Psoas muscle (tissue), 8 donors: ENCODE measurements at regions of chr17 and their contacts with region 1.

Region 1: DNA sequence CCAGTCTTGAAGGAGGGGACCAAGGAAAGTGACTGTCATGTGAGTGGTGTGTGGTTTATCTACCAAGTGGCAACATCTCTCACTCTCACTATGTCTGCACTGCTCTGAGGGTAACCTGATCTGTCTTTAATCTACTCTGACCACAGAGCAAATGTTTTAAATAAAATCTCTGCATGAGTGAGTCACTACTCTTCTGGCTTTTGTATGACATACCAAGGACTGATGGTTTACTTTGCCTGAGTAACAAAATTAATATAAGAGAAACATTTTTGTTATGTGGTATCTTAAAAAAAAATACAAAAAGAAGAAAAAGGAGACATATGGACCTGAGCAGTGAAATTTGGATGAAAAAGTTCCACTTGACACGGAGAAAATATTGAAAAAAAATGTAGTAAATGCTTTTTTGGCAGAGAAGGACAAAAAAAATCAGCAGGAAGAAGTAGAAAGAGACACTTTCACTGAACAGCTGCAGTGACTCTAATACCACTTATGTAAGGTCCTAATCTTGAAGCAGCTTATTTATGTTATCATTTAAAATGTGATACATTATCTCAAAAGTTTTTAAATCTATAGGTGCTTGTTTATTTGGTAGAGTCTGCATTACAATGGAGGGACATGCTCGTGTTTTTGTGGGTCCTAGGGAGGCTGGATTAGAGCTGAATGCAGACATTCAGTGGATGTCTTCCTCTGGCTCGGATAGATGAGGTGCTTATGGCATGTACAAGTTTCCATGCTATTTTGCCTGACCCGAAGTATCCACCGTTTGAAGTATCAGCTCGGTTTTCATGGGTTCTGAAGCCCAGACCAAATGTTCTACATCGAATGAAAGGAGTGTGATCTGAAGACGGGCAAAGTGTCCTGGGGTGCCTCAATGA is 240.7 kb downstream of the MAP2K6 start:
- DNase-seq: no peak
- ATAC-seq: peak; percentile 90 to 98 (median 96)
- H3K4me3 ChIP-seq: no peak overlapping the region
- H3K27ac ChIP-seq: peak overlapping the region; percentile 27
- H3K4me1 ChIP-seq: peaks cover 12% of the 10 kb centered on the region
- H3K27me3 ChIP-seq: no peaks in the 10 kb centered on the region
- CTCF ChIP-seq: no peak

Region 2: GRCh38 chr17:69179227-69179952 is 475.8 kb before region 1 on chr17:
- intact Hi-C with region 1: no loop called
- DNase-seq: no peak
- ATAC-seq: no peak
- H3K4me3 ChIP-seq: no peak overlapping the region
- H3K27ac ChIP-seq: no peak overlapping the region
- H3K4me1 ChIP-seq: no peaks in the 10 kb centered on the region
- H3K27me3 ChIP-seq: no peaks in the 10 kb centered on the region
- CTCF ChIP-seq: no peak

Region 3: DNA sequence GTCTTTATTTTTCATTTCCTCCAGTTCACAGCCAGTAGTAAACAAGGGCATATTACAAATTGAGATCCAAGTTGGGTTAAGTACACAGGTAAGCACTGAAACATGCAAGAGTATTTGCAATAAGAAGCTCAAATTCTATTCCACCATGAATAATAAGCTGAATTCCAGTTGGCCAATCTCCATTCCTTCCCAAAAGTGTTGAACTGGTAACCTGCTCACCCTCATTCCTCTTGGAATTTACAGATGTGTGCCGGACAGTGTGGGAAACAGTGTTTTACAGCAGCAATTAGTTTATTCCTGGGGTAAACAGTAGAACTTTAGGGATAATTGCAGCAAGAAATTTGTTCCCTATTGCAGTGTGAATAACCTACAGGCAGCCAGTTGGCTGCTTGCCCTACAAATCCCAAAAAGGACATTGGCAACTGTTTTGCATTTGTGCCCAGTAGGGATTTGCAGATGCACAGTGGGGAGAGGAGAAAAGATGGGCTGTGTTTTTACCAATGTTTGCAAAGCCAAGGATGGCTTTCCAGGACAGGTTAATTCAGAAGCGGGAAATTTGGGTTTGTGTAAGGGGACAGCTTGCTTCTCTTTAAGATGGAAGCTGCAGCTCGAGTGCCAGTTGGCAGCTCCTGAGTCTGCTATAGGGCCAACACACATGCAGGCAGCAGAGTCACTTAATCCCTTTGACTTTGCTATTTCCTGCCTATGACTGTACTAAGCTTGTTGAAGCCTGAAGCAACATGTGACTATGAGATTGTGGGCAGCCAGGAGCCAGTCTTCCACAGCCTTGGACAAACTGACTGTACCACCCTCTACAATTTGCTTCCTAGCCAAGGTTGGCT is 78.2 kb after region 1 on chr17:
- intact Hi-C with region 1: loop called in 1 of 2 experiments (anchors 5 kb)
- DNase-seq: peak; percentile 48 to 83
- ATAC-seq: peak; percentile 99 to 100 (median 100)
- H3K4me3 ChIP-seq: no peak overlapping the region
- H3K27ac ChIP-seq: peak overlapping the region; percentile 73
- H3K4me1 ChIP-seq: peaks cover 39% of the 10 kb centered on the region
- H3K27me3 ChIP-seq: no peaks in the 10 kb centered on the region
- CTCF ChIP-seq: no peak

Region 4: DNA sequence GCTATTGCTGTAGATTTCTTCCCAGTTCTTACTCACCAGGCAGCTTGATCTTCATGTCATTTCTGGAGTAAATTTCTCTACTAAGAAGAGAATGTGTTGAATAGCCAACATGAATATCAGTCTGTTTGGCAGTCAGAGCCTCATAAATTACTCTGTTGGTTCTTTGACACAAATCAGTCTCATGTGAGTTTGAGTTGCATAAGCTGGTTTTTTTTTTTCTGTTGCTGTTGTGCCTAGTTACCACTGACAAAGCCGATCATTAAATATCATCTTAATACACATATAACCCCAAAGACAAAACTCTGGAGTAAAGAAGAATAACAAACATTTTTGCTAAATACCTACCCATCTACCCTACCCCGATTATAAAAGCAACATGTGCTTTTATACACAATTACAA is 179.3 kb after region 1 on chr17:
- intact Hi-C with region 1: loop called in 1 of 2 experiments (anchors 10 kb)
- DNase-seq: no peak
- ATAC-seq: peak in 1 of 4 donors; percentile 32
- H3K4me3 ChIP-seq: no peak overlapping the region
- H3K27ac ChIP-seq: no peak overlapping the region
- H3K4me1 ChIP-seq: peaks cover 7% of the 10 kb centered on the region
- H3K27me3 ChIP-seq: no peaks in the 10 kb centered on the region
- CTCF ChIP-seq: no peak